ENCODE measurements at regions of chr15 and their contacts with region 1.

Region 1: GRCh38 chr15:84874981-84875699 is 9.3 kb upstream of the SLC28A1 start:
- DNase-seq: no peak
- H3K4me3 ChIP-seq: no peak overlapping the region
- H3K27ac ChIP-seq: no peak overlapping the region
- H3K4me1 ChIP-seq: peaks cover 0 to 15% (median 0%) of the 10 kb centered on the region in 4 donors
- H3K27me3 ChIP-seq: no peaks in the 10 kb centered on the region
- CTCF ChIP-seq: no peak
- EP300 ChIP-seq: no peak
- POLR2A ChIP-seq: no peak

Region 2: GRCh38 chr15:84600851-84601838 is 274.0 kb before region 1 on chr15 and contains the start of gene ZSCAN2:
- intact Hi-C with region 1: loop called (anchors 2 kb)
- DNase-seq: peak; percentile 97
- H3K4me3 ChIP-seq: peak within 1 kb of the TSS; percentile 77 to 98 (median 91)
- H3K27ac ChIP-seq: peak within 1 kb of the TSS; percentile 74 to 84 (median 78)
- H3K4me1 ChIP-seq: peaks cover 0 to 22% (median 10%) of the 10 kb centered on the region in 4 donors
- H3K27me3 ChIP-seq: no peaks in the 10 kb centered on the region
- CTCF ChIP-seq: no peak
- EP300 ChIP-seq: peak in 1 of 4 donors; percentile 12
- POLR2A ChIP-seq: no peak
- total RNA-seq, gene ZSCAN2: 4.2 to 17.0 (median 6.8) TPM

Region 3: GRCh38 chr15:84929744-84930371 is 54.7 kb after region 1 on chr15:
- intact Hi-C with region 1: no loop called
- DNase-seq: no peak
- H3K4me3 ChIP-seq: no peak overlapping the region
- H3K27ac ChIP-seq: no peak overlapping the region
- H3K4me1 ChIP-seq: peaks cover 0 to 8% (median 7%) of the 10 kb centered on the region in 4 donors
- H3K27me3 ChIP-seq: no peaks in the 10 kb centered on the region
- CTCF ChIP-seq: no peak
- EP300 ChIP-seq: no peak
- POLR2A ChIP-seq: no peak

Measured in sigmoid colon (tissue), 7 donors.